ENCODE measurements at regions of chr10 and their contacts with region 1.

Region 1: GRCh38 chr10:128125944-128126764 is at the start of gene MKI67:
- DNase-seq: peak; percentile 94
- ATAC-seq: peak; percentile 94
- H3K4me3 ChIP-seq: peak within 1 kb of the TSS; percentile 60 to 96 (median 73)
- H3K4me3 Mint-ChIP-seq: peak within 1 kb of the TSS; percentile 89
- H3K27ac ChIP-seq: peak within 1 kb of the TSS; percentile 72 to 74
- H3K27ac Mint-ChIP-seq: peak within 1 kb of the TSS; percentile 66
- H3K4me1 ChIP-seq: peaks cover 18 to 23% of the 10 kb centered on the region in 2 donors
- H3K4me1 Mint-ChIP-seq: peaks cover 29% of the 10 kb centered on the region
- H3K27me3 ChIP-seq: peaks cover 0 to 23% (median 19%) of the 10 kb centered on the region in 4 experiments
- H3K27me3 Mint-ChIP-seq: peaks cover 27% of the 10 kb centered on the region
- CTCF ChIP-seq: no peak
- total RNA-seq, gene MKI67: 0.47 and 0.58 TPM in 2 replicates

Region 2: DNA sequence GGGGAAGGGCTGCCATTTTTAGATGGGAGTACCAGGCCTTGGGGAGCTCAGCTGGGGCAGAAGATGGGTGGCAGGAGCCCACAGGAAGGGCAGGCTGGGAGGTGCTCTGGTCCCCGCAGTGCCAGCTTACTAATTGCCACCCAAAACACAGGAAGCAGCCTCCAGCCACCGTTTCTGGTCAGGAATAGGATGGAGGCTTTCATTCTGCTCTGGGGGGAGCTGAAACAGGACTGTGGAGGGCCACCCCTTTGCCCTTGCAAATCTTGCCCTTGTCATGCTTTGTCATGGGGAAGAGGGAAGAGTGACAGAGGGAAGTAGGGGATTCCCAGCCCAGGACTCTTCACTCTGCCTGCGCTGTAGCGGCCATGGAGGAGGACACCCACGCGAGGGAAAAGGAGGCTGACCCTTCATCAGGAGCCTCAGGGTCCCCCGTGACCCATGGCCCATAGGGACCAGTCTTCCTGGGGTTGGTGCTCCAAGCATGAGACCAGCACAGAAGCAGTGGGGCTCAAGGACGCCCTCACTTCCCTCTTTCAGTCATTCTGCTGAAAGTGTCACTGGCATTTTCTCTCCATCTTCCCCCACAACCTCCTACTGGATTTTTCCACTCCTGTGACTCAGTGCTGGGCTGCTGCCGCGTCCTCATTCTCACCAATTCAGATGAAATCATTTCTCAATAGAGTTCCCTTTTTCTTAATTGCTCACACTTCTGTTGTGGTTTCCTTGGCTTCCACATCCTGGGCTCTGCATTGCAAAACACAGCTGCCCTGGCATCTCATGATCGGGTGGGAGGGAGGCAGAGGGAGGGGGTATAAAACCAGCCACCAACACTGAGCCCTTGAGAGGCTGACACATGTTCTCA is 61.8 kb before region 1 on chr10:
- CTCF ChIA-PET with region 1: interaction called, 4 read pairs
- POLR2A ChIA-PET with region 1: no interaction called
- intact Hi-C with region 1: loop called (anchors 1 kb)
- DNase-seq: peak; percentile 92
- ATAC-seq: peak; percentile 74
- H3K4me3 ChIP-seq: peak overlapping the region; percentile 3 to 48 (median 31)
- H3K4me3 Mint-ChIP-seq: peak overlapping the region; percentile 75
- H3K27ac ChIP-seq: peak overlapping the region; percentile 86 to 89
- H3K27ac Mint-ChIP-seq: peak overlapping the region; percentile 85
- H3K4me1 ChIP-seq: peaks cover 47 to 65% of the 10 kb centered on the region in 2 donors
- H3K4me1 Mint-ChIP-seq: peaks cover 75% of the 10 kb centered on the region
- H3K27me3 ChIP-seq: no peaks in the 10 kb centered on the region
- H3K27me3 Mint-ChIP-seq: no peaks in the 10 kb centered on the region
- CTCF ChIP-seq: no peak

Region 3: GRCh38 chr10:128211953-128212727 is 86.0 kb after region 1 on chr10:
- CTCF ChIA-PET with region 1: interaction called, 3 read pairs
- POLR2A ChIA-PET with region 1: interaction called, 3 read pairs
- intact Hi-C with region 1: loop called (anchors 1 kb)
- DNase-seq: peak; percentile 89
- ATAC-seq: peak; percentile 87
- H3K4me3 ChIP-seq: no peak overlapping the region
- H3K4me3 Mint-ChIP-seq: peak overlapping the region; percentile 82
- H3K27ac ChIP-seq: no peak overlapping the region
- H3K27ac Mint-ChIP-seq: peak overlapping the region; percentile 78
- H3K4me1 ChIP-seq: peaks cover 8 to 12% of the 10 kb centered on the region in 2 donors
- H3K4me1 Mint-ChIP-seq: peaks cover 12% of the 10 kb centered on the region
- H3K27me3 ChIP-seq: peaks cover 0 to 13% (median 0%) of the 10 kb centered on the region in 4 experiments
- H3K27me3 Mint-ChIP-seq: peaks cover 23% of the 10 kb centered on the region
- CTCF ChIP-seq: peak; percentile 89

Region 4: GRCh38 chr10:129466703-129467358 is 1340.7 kb after region 1 on chr10 and contains the start of gene MGMT:
- CTCF ChIA-PET with region 1: no interaction called
- POLR2A ChIA-PET with region 1: no interaction called
- intact Hi-C with region 1: loop called (anchors 5 kb)
- DNase-seq: peak; percentile 94
- ATAC-seq: peak; percentile 99
- H3K4me3 ChIP-seq: peak within 1 kb of the TSS; percentile 6 to 85 (median 82)
- H3K4me3 Mint-ChIP-seq: peak within 1 kb of the TSS; percentile 89
- H3K27ac ChIP-seq: peak within 1 kb of the TSS; percentile 69 to 81
- H3K27ac Mint-ChIP-seq: peak within 1 kb of the TSS; percentile 85
- H3K4me1 ChIP-seq: peaks cover 13 to 18% of the 10 kb centered on the region in 2 donors
- H3K4me1 Mint-ChIP-seq: peaks cover 22% of the 10 kb centered on the region
- H3K27me3 ChIP-seq: no peaks in the 10 kb centered on the region
- H3K27me3 Mint-ChIP-seq: no peaks in the 10 kb centered on the region
- CTCF ChIP-seq: no peak
- total RNA-seq, gene MGMT: 84.5 and 87.7 TPM in 2 replicates

Measured in B cell (primary cell).